Activated CD4-positive, alpha-beta T cell treated with anti-CD3 and anti-CD28 coated beads, Interleukin-2, amount 10 ng/mL, durations not matched to agents 7 days and 5 days (primary cell): ENCODE measurements at regions of chr18 and their contacts with region 1.

Region 1: DNA sequence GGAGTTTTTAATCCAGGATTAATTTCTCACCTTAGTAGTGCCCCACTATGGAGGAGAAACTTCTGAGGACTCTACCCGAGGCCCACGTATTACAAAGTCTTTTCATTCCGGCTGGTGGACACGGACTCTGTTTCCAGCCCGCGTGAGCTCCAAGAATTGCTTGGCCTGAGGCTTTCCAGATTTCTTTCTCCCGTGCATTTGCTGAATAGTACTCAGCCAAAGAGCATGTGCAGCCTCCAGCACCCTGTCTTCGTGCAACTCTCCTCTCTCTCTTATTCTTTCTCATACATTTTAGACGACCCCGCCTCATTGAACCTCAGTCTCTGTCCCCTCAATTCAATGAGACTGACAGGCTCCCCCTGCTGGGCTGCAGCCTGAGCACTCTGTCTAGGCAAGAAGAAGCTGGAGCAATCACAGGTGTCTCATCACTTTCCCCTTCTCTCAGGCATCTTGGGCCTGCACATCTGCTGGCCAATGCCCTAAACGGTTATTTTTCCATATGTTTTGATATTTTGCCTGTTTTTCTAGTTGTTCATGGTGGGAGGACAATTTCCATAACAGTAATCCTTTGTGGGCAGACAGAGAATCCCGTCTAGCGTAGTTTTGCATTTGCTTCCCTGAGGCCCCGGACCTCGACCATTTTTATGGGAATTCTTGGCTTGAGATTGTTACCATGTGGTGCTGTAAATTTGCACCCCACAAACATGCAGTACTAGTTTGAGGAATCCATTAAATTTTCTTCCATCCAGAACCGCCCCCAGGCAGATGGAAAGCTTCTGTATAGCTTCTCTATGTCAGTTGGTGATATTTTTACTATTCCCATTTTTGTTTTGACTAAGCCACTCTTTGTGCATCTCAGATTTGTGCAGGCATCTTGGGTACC is 50.1 kb upstream of the LPIN2 start:
- DNase-seq: peak; percentile 84
- H3K4me3 Mint-ChIP-seq: peak overlapping the region; percentile 73
- H3K27ac Mint-ChIP-seq: peak overlapping the region; percentile 94
- H3K4me1 Mint-ChIP-seq: peaks cover 70% of the 10 kb centered on the region
- H3K27me3 Mint-ChIP-seq: no peaks in the 10 kb centered on the region

Region 2: DNA sequence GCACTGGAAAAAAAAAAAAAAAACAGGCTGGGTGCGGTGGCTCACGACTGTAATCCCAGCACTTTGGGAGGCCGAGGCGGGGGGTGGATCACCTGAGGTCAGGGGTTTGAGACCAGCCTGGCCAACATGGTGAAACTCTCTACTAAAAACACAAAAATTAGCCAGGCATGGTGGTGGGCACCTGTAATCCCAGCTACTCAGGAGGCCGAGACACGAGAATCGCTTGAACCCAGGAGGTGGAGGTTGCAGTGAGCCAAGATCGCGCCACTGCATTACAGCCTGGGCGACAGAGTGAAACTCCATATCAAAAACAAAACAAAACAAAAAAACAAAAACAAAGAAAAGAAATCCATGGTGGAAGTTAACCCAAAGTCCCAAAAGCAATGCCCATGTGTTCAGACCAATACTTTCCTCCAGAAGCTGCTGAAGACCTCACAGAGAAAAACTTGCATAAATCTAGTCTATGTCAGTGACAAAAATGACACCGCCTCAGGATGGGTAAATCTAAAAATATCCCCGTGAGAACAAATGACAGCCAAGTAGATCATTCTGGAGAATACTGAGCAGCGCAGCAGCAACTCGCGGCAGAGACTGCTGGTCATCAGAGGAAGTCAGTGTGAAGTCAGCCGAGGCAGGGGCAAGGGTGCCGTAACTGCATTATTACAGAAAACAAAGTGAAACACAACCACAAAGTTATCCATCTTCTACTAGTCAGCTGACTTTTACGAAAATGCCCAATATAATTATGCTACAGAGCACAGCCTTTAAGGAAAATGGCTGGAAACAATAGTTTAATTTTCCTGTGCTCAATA is 91.1 kb before region 1 on chr18:
- CTCF ChIA-PET with region 1: interaction called, 10 read pairs
- POLR2A ChIA-PET with region 1: no interaction called
- DNase-seq: peak; percentile 75
- H3K4me3 Mint-ChIP-seq: peak overlapping the region; percentile 76
- H3K27ac Mint-ChIP-seq: peak overlapping the region; percentile 97
- H3K4me1 Mint-ChIP-seq: peaks cover 91% of the 10 kb centered on the region
- H3K27me3 Mint-ChIP-seq: no peaks in the 10 kb centered on the region

Region 3: GRCh38 chr18:3008541-3008940 is 54.5 kb before region 1 on chr18:
- CTCF ChIA-PET with region 1: interaction called, 11 read pairs
- POLR2A ChIA-PET with region 1: interaction called, 3 read pairs
- DNase-seq: no peak
- H3K4me3 Mint-ChIP-seq: no peak overlapping the region
- H3K27ac Mint-ChIP-seq: no peak overlapping the region
- H3K4me1 Mint-ChIP-seq: peaks cover 56% of the 10 kb centered on the region
- H3K27me3 Mint-ChIP-seq: no peaks in the 10 kb centered on the region

Region 4: DNA sequence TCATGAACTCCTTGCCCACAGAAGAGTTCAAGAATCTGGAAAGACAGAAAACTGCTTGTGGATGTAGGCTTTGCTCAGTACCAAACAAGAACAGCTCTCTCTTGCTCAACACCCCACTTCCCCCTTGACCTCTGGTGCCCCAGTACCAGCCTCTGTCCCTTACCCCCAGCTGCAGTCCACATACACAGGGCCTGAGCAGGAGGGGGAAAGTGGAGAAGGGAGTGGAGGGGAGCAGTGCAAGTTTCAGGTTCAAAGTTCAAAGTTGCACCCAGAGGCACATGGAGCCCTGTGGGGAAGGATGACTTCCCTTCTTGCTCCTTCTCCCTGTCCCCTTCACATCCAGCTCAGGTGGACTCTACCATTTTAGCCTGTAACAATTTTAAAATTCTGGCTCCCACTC is 11.0 kb after region 1 on chr18:
- CTCF ChIA-PET with region 1: interaction called, 83 read pairs
- POLR2A ChIA-PET with region 1: interaction called, 4 read pairs
- DNase-seq: no peak
- H3K4me3 Mint-ChIP-seq: no peak overlapping the region
- H3K27ac Mint-ChIP-seq: no peak overlapping the region
- H3K4me1 Mint-ChIP-seq: peaks cover 40% of the 10 kb centered on the region
- H3K27me3 Mint-ChIP-seq: no peaks in the 10 kb centered on the region